ENCODE measurements at regions of chr4 and their contacts with region 1.

Region 1: DNA sequence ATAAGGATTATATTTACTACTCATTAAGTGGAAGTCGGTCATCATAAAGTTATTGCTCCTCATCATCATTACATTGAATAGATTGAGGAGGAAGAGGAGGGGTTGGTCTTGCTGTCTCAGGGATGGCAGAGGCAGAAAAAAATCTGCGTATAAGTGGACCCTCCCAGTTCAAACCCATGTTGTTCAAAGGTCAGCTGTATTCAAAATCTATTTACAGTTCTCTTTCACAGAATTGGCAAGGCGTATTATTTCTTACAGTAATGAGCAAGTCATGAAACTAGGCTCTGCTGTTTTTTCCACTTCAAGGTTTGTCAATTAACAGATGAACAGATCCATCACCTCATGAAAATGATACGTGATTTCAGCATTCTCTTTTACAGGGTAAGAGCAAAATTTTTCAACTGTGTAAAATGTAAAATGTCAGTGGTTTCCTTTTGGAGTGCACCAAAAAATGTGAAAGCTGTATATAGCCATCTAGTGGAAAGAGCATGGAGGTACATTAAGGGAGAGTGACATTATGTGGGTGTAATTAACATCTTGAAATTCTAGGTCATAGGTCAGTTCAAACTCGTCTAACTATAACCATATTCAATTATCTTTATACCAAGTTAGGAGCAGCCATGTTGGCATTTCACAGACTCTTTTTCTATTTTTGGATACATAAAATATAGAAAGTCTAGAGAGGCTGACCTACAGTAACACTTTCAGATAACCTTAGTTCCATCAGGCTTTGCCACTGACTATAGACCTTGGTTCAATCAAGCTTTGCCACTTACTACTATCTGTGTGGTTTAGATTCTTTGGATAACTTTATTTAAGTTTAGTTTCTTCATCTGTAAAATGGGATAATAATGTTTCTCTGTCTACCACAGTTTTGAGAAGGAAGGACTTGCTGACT is 30.1 kb downstream of the NEIL3 start:
- DNase-seq: peak; percentile 41
- H3K4me3 ChIP-seq: no peak overlapping the region
- H3K27ac ChIP-seq: no peak overlapping the region
- H3K4me1 ChIP-seq: peaks cover 2% of the 10 kb centered on the region
- H3K27me3 ChIP-seq: no peaks in the 10 kb centered on the region
- CTCF ChIP-seq: peak; percentile 63

Region 2: GRCh38 chr4:176383273-176384077 is 956.3 kb before region 1 on chr4:
- CTCF ChIA-PET with region 1: no interaction called
- POLR2A ChIA-PET with region 1: no interaction called
- intact Hi-C with region 1: loop called (anchors 10 kb)
- DNase-seq: no peak
- H3K4me3 ChIP-seq: no peak overlapping the region
- H3K27ac ChIP-seq: no peak overlapping the region
- H3K4me1 ChIP-seq: no peaks in the 10 kb centered on the region
- H3K27me3 ChIP-seq: peaks cover 18% of the 10 kb centered on the region
- CTCF ChIP-seq: no peak

Region 3: DNA sequence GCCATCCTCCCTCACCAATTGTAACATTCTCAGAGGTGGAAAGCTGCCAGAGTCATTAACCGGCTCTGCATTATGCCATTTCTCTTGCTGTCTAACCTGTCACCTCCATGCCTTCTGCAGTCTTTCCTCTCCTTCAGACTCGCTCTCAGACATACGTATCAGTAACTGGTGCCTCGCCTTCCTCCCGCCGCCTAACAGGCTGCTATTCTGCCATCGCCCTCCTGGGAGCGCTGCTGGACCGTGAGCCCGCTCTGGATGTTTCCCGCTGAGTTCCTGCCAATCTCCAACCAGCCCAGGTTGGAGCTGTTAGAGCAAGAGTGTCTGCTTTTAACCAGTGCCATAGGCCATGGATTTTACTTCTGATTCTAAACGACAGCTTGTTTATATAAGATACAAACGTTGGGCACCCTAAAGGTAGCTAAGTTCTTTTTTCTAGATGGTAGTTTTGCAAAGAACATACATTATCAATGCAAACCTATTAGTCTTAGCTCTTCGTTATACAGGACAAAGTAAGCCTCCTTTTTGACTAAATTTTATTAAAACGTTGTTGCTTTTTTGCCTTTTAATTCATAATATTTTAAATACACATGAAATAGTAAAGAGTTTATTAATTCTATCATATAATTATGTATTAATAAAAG is 89.5 kb before region 1 on chr4:
- CTCF ChIA-PET with region 1: interaction called, 4 read pairs
- POLR2A ChIA-PET with region 1: no interaction called
- intact Hi-C with region 1: loop called (anchors 2 kb)
- DNase-seq: peak; percentile 74
- H3K4me3 ChIP-seq: no peak overlapping the region
- H3K27ac ChIP-seq: no peak overlapping the region
- H3K4me1 ChIP-seq: no peaks in the 10 kb centered on the region
- H3K27me3 ChIP-seq: peaks cover 16% of the 10 kb centered on the region
- CTCF ChIP-seq: peak; percentile 99

Measured in A673 (cell line).